ENCODE measurements at regions of chr10 and their contacts with region 1.

Region 1: GRCh38 chr10:97210543-97210961 is 24.8 kb upstream of the SLIT1 start:
- DNase-seq: peak; percentile 57 to 67 (median 65)
- H3K4me3 ChIP-seq: no peak overlapping the region
- H3K4me3 Mint-ChIP-seq: no peak overlapping the region
- H3K27ac ChIP-seq: no peak overlapping the region
- H3K27ac Mint-ChIP-seq: no peak overlapping the region
- H3K4me1 ChIP-seq: no peaks in the 10 kb centered on the region
- H3K4me1 Mint-ChIP-seq: no peaks in the 10 kb centered on the region
- H3K27me3 ChIP-seq: no peaks in the 10 kb centered on the region
- H3K27me3 Mint-ChIP-seq: peaks cover 5 to 6% (median 5%) of the 10 kb centered on the region in 3 donors
- CTCF ChIP-seq: peak; percentile 98

Region 2: DNA sequence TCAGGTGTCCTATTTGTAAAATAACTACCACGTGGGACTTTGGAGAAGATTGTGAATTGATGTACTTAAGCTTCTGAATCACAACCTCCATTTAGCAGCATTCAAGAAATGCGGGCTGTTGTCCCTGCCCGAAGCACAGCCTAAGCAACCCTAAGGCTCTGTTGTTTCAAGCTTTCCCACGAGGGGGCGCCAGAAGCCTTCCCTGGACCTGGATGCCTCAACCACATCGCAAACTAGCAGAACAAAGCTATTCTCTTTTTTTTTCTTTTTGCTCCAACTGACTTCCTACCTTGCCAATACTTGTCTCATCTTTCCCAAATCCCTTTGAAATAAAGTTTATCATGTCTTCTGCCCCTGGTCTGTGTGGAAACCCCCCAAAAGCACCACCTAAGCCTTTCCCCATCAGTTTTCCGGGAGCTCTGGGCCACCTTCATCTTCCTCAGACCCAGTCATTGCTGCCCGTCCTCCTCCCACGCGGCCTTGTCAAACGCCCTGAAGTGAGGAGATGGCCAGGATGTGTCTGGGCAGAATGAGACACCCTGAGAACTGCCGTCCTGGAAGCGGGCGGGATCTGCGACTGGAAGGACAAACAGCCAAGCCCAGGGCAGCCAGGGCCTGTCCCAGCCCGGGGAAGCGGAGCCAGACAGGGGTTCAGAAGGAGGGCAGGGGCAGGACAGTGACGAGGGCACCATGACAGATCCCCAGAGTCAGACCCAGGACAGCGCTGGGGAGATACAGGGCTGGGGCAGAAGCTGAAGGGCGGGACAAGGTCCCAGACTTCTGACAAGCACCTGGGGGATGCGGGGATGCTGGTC is 137.5 kb before region 1 on chr10:
- intact Hi-C with region 1: loop called (anchors 5 kb)
- DNase-seq: peak; percentile 42 to 56 (median 50)
- H3K4me3 ChIP-seq: no peak overlapping the region
- H3K4me3 Mint-ChIP-seq: no peak overlapping the region
- H3K27ac ChIP-seq: no peak overlapping the region
- H3K27ac Mint-ChIP-seq: no peak overlapping the region
- H3K4me1 ChIP-seq: no peaks in the 10 kb centered on the region
- H3K4me1 Mint-ChIP-seq: no peaks in the 10 kb centered on the region
- H3K27me3 ChIP-seq: no peaks in the 10 kb centered on the region
- H3K27me3 Mint-ChIP-seq: peaks cover 7 to 15% (median 10%) of the 10 kb centered on the region in 3 donors
- CTCF ChIP-seq: peak; percentile 93

Region 3: DNA sequence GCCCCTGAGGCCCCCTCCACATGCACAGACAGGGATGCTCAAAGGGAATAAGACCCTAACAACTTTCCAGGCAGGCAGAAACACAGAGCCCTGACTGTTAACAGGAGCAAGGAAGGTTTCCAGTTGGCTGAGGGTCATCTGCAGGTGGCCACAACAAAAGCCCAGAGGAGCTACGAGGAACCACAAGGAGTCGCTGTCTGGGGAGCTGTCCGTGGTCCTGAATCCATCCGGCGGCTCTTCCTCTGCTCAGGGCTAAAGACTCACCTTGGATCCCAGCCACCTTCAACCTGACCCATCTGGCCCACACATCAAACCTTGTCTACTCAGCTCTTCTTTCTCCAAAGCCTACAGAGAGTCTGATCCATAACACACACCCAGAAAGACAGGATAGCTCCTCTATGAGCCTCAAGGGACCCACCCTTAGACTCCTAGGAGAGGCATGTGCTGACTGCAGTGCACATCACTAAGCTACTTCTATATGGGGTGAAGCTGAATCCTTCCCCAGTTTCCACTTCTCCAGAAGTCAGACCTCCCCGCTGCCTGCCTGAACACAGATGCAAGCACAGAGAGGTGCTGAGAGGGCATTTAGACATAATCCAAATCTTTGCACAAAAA is 128.8 kb before region 1 on chr10:
- intact Hi-C with region 1: loop called in 1 of 2 experiments (anchors 5 kb)
- DNase-seq: peak; percentile 34 to 46 (median 41)
- H3K4me3 ChIP-seq: no peak overlapping the region
- H3K4me3 Mint-ChIP-seq: no peak overlapping the region
- H3K27ac ChIP-seq: no peak overlapping the region
- H3K27ac Mint-ChIP-seq: no peak overlapping the region
- H3K4me1 ChIP-seq: no peaks in the 10 kb centered on the region
- H3K4me1 Mint-ChIP-seq: no peaks in the 10 kb centered on the region
- H3K27me3 ChIP-seq: peaks cover 0 to 9% of the 10 kb centered on the region in 2 donors
- H3K27me3 Mint-ChIP-seq: peaks cover 15 to 21% (median 19%) of the 10 kb centered on the region in 3 donors
- CTCF ChIP-seq: peak; percentile 85

Region 4: GRCh38 chr10:97101166-97101940 is 109.2 kb before region 1 on chr10:
- intact Hi-C with region 1: no loop called
- DNase-seq: no peak
- H3K4me3 ChIP-seq: no peak overlapping the region
- H3K4me3 Mint-ChIP-seq: no peak overlapping the region
- H3K27ac ChIP-seq: no peak overlapping the region
- H3K27ac Mint-ChIP-seq: no peak overlapping the region
- H3K4me1 ChIP-seq: no peaks in the 10 kb centered on the region
- H3K4me1 Mint-ChIP-seq: no peaks in the 10 kb centered on the region
- H3K27me3 ChIP-seq: peaks cover 0 to 9% of the 10 kb centered on the region in 2 donors
- H3K27me3 Mint-ChIP-seq: peaks cover 12 to 21% (median 20%) of the 10 kb centered on the region in 3 donors
- CTCF ChIP-seq: no peak

Region 5: GRCh38 chr10:97157578-97158095 is 52.9 kb before region 1 on chr10:
- intact Hi-C with region 1: no loop called
- DNase-seq: peak in 1 of 3 donors; percentile 31
- H3K4me3 ChIP-seq: no peak overlapping the region
- H3K4me3 Mint-ChIP-seq: no peak overlapping the region
- H3K27ac ChIP-seq: no peak overlapping the region
- H3K27ac Mint-ChIP-seq: no peak overlapping the region
- H3K4me1 ChIP-seq: no peaks in the 10 kb centered on the region
- H3K4me1 Mint-ChIP-seq: peaks cover 3% of the 10 kb centered on the region
- H3K27me3 ChIP-seq: no peaks in the 10 kb centered on the region
- H3K27me3 Mint-ChIP-seq: peaks cover 0 to 6% (median 2%) of the 10 kb centered on the region in 3 donors
- CTCF ChIP-seq: no peak

Region 6: DNA sequence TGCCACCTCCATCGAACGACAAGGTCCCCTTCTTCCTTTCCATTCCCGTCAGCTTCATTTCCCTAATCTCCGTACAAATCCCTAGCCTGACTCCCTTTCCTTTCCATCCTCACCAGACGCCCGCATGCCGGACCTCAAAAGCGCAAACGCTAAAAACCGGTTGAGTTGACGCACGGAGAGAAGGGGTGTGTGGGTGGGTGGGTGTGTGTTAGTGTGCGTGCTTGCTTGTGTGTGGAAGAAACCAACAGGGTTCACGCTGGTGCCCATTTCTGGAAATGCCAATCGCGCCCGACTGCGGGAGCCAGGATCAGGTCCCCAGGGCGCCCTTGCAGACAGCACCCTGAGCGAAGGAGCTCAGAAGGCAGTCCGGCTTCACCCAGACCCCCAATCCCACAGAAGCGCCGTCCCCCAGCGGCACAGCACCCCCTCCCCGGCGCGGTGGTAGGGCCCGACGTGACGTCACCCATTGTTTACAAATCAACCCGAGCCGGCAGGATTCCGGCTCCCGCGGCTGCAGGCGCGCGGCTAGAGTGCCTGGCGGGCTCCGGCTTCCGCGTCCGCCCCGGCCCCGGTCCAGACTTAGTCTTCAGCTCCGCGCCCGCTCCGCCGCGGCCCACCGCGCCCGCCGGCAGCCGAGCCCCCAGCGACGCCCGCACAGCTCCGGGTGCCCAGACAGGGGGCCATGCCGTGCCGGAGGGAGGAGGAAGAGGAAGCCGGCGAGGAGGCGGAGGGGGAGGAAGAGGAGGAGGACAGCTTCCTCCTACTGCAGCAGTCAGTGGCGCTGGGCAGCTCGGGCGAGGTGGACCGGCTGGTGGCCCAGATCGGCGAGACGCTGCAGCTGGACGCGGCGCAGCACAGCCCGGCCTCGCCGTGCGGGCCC is 108.5 kb after region 1 on chr10 and contains the start of gene FRAT1:
- intact Hi-C with region 1: no loop called
- DNase-seq: peak; percentile 83 to 92 (median 91)
- H3K4me3 ChIP-seq: peak within 1 kb of the TSS; percentile 88 to 100 (median 96)
- H3K4me3 Mint-ChIP-seq: peak within 1 kb of the TSS; percentile 97 to 100
- H3K27ac ChIP-seq: peak within 1 kb of the TSS; percentile 96 to 98
- H3K27ac Mint-ChIP-seq: peak within 1 kb of the TSS; percentile 99 to 100 (median 100)
- H3K4me1 ChIP-seq: peaks cover 51 to 62% of the 10 kb centered on the region in 2 donors
- H3K4me1 Mint-ChIP-seq: peaks cover 63% of the 10 kb centered on the region
- H3K27me3 ChIP-seq: no peaks in the 10 kb centered on the region
- H3K27me3 Mint-ChIP-seq: peaks cover 0 to 3% (median 2%) of the 10 kb centered on the region in 3 donors
- CTCF ChIP-seq: no peak
- polyA plus RNA-seq, gene FRAT1: 17.0 to 34.4 (median 31.2) TPM